ENCODE measurements at regions of chr2 and their contacts with region 1.

Region 1: DNA sequence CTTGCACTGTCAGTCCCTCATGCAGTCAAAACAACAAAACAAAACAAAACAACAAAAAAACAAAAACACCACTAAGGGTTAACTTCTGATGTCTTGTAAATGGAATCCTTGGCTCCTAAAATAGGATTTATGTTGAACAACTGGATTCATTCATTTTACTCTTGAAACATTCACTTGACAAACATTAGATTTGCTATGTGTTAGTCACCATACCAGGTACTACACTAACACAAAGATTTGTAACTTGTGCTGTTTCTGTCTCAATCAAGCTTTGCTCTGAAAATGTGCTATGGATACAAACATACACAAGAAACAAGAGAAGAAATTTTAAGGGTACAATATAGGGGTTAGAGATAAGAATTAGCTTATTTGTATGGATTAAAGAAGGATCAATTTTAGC is 812.8 kb downstream of the LRP1B start:
- DNase-seq: no peak
- H3K4me3 ChIP-seq: no peak overlapping the region
- H3K27ac ChIP-seq: no peak overlapping the region
- H3K4me1 ChIP-seq: no peaks in the 10 kb centered on the region
- H3K27me3 ChIP-seq: no peaks in the 10 kb centered on the region
- CTCF ChIP-seq: no peak

Region 2: GRCh38 chr2:141439527-141439926 is 121.5 kb after region 1 on chr2:
- CTCF ChIA-PET with region 1: no interaction called
- POLR2A ChIA-PET with region 1: interaction called, 11 read pairs
- intact Hi-C with region 1: no loop called
- DNase-seq: no peak
- H3K4me3 ChIP-seq: no peak overlapping the region
- H3K27ac ChIP-seq: no peak overlapping the region
- H3K4me1 ChIP-seq: no peaks in the 10 kb centered on the region
- H3K27me3 ChIP-seq: no peaks in the 10 kb centered on the region
- CTCF ChIP-seq: no peak

Measured in A673 (cell line).